Heart left ventricle (tissue), 16 donors: ENCODE measurements at regions of chr9 and their contacts with region 1.

Region 1: DNA sequence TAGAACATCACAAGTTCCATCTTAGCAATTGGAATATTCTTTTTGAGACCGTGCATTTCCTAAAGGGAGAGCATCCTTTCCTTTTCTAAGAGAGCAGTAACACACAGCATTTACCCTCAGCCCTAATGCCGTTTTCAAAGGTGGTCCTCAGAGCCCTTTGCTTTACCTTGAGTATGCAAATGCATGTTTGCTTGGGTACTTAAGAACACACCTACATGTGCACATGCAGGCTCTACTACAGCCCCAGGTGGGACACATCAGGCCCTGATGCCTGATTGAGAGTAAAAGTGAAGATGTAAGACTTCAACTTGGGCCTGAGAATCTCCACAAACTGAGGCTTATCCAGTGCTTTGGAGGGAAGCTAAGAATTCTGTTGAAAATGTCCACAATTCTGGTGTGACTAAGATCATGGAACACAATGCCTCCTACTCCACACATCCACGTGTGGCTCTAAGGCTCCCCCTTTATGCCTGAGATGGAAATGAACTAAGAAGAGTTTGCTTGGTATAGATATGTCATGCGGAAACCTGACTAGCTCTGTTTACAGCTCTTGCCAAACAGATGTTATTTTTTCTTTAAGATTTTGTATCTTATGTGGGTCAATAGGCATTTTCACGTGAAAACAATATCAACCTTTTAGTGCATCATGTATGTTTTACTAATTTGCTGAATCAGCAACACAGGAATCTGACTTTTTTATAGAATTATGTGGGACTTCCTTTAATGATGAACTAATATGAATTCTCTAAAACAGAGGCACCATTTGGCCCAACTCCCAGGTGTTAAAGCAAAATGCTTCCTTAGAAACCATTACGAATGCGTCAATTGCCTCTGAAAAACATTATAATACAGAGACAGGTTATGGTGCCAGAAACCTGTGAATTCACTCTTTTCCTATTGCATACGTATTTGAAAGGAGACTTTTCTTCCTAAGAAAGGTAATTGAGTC is 48.9 kb upstream of the SLC2A8 start:
- DNase-seq: no peak
- ATAC-seq: peak in 3 of 4 donors; percentile 59 to 75 (median 73)
- H3K4me3 ChIP-seq: no peak overlapping the region
- H3K27ac ChIP-seq: peak overlapping the region in 6 of 12 donors; percentile 10 to 47 (median 30)
- H3K4me1 ChIP-seq: peaks cover 0 to 49% (median 11%) of the 10 kb centered on the region in 12 donors
- H3K27me3 ChIP-seq: no peaks in the 10 kb centered on the region
- CTCF ChIP-seq: peak; percentile 27 to 66 (median 50)
- POLR2A ChIP-seq: no peak

Region 2: DNA sequence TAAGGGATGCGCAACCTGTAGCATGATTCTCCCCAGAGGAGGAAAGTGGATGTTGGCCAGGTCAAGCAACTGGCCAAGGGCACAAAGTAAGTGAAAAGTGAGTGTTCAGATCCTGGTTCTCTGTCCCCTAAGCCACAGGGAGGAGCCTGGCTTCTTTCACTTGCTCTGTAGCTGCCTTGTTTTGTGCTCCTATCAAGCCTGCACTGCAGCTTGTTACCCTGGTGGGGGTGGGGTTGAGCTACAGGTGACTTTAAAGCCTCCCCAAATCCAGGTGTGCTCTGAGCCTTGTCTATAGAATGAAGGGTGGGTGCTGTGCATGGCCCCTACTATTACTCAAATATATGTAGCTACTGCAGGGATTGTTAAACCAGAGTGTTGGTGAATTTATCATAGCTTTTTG is 400.6 kb before region 1 on chr9:
- intact Hi-C with region 1: loop called in 1 of 10 experiments (anchors 10 kb)
- DNase-seq: no peak
- ATAC-seq: peak in 2 of 4 donors; percentile 39 to 42
- H3K4me3 ChIP-seq: no peak overlapping the region
- H3K27ac ChIP-seq: no peak overlapping the region
- H3K4me1 ChIP-seq: peaks cover 0 to 28% (median 8%) of the 10 kb centered on the region in 12 donors
- H3K27me3 ChIP-seq: no peaks in the 10 kb centered on the region
- CTCF ChIP-seq: peak in 7 of 12 donors; percentile 5 to 30 (median 14)
- POLR2A ChIP-seq: no peak

Region 3: DNA sequence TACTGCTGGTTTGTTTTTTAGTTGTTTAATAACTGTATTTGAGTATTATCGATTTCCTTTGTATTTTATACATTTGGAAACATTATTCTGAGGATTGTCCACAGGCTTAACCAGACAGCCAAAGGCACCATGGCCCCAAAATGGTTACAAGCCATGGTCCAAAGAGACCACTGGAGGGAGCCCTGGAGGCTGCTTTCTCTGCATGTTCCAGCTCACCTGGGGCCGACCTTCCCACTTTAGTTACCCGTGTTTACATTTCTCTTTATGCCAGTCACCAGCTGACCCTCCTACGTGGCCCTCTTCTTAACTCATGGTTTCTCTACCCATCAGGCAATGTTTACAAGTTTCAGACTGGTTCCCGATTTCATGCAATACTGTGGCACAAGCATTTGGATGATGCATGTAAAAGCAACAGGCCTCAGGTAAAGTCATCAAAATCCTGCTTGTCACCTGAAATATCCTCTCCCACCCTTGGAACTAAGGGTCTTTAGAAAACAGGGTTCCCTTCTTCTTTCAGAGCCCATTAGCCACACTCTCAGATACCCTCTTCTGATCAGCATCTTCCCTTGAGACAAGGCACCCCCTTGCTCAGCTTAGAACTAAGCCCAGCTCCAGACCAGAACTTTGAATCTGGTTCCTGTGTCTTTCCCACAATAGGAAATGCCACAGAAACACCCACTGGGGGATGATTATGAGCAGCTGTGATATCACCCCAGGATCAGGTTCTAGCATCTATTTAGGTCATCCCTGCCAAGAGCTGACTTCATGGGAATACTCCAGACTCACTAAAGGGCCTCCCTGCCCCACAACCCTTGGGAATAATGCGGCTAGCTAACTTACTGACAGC is 133.5 kb before region 1 on chr9:
- intact Hi-C with region 1: loop called in 5 of 10 experiments (anchors 2 to 10 kb)
- DNase-seq: peak in 1 of 5 donors; percentile 53
- ATAC-seq: peak in 3 of 4 donors; percentile 27 to 60 (median 59)
- H3K4me3 ChIP-seq: no peak overlapping the region
- H3K27ac ChIP-seq: no peak overlapping the region
- H3K4me1 ChIP-seq: peaks cover 0 to 8% (median 0%) of the 10 kb centered on the region in 12 donors
- H3K27me3 ChIP-seq: no peaks in the 10 kb centered on the region
- CTCF ChIP-seq: peak; percentile 58 to 82 (median 74)
- POLR2A ChIP-seq: no peak

Region 4: GRCh38 chr9:127224178-127224882 is 123.8 kb before region 1 on chr9:
- intact Hi-C with region 1: loop called in 7 of 10 experiments (anchors 2 to 10 kb)
- DNase-seq: peak; percentile 91 to 96 (median 95)
- ATAC-seq: peak; percentile 88 to 90 (median 88)
- H3K4me3 ChIP-seq: peak overlapping the region; percentile 38 to 96 (median 62)
- H3K27ac ChIP-seq: peak overlapping the region; percentile 66 to 88 (median 82)
- H3K4me1 ChIP-seq: peaks cover 0 to 25% (median 9%) of the 10 kb centered on the region in 12 donors
- H3K27me3 ChIP-seq: no peaks in the 10 kb centered on the region
- CTCF ChIP-seq: peak in 6 of 12 donors; percentile 20 to 38 (median 25)
- POLR2A ChIP-seq: peak in 1 of 2 donors; percentile 30

Region 5: GRCh38 chr9:127311239-127311741 is 36.8 kb before region 1 on chr9:
- intact Hi-C with region 1: loop called in 6 of 10 experiments (anchors 2 to 5 kb)
- DNase-seq: peak in 4 of 5 donors; percentile 25 to 45 (median 34)
- ATAC-seq: peak; percentile 25 to 57 (median 54)
- H3K4me3 ChIP-seq: peak overlapping the region in 1 of 12 donors; percentile 7
- H3K27ac ChIP-seq: peak overlapping the region; percentile 45 to 88 (median 72)
- H3K4me1 ChIP-seq: peaks cover 0 to 59% (median 31%) of the 10 kb centered on the region in 12 donors
- H3K27me3 ChIP-seq: no peaks in the 10 kb centered on the region
- CTCF ChIP-seq: peak; percentile 26 to 72 (median 58)
- POLR2A ChIP-seq: no peak